Activated B cell treated with CpG ODN at 0.5 μM for 24 hours (primary cell): ENCODE measurements at regions of chr13 and their contacts with region 1.

Region 1: GRCh38 chr13:40580566-40581276 is 85.7 kb downstream of the FOXO1 start:
- DNase-seq: no peak
- ATAC-seq: no peak
- H3K4me3 Mint-ChIP-seq: peak overlapping the region; percentile 64
- H3K27ac Mint-ChIP-seq: peak overlapping the region; percentile 78
- H3K4me1 Mint-ChIP-seq: peaks cover 92% of the 10 kb centered on the region
- H3K27me3 Mint-ChIP-seq: no peaks in the 10 kb centered on the region
- CTCF ChIP-seq: no peak

Region 2: GRCh38 chr13:40564342-40565001 is 16.2 kb before region 1 on chr13:
- CTCF ChIA-PET with region 1: interaction called, 3 read pairs
- POLR2A ChIA-PET with region 1: interaction called, 7 read pairs
- intact Hi-C with region 1: loop called (anchors 2 kb)
- DNase-seq: no peak
- ATAC-seq: peak; percentile 47
- H3K4me3 Mint-ChIP-seq: peak overlapping the region; percentile 63
- H3K27ac Mint-ChIP-seq: peak overlapping the region; percentile 59
- H3K4me1 Mint-ChIP-seq: peaks cover 87% of the 10 kb centered on the region
- H3K27me3 Mint-ChIP-seq: no peaks in the 10 kb centered on the region
- CTCF ChIP-seq: no peak

Region 3: GRCh38 chr13:40660141-40660664 is 79.5 kb after region 1 on chr13:
- CTCF ChIA-PET with region 1: no interaction called
- POLR2A ChIA-PET with region 1: interaction called, 11 read pairs
- intact Hi-C with region 1: no loop called
- DNase-seq: no peak
- ATAC-seq: no peak
- H3K4me3 Mint-ChIP-seq: peak overlapping the region; percentile 6
- H3K27ac Mint-ChIP-seq: no peak overlapping the region
- H3K4me1 Mint-ChIP-seq: peaks cover 83% of the 10 kb centered on the region
- H3K27me3 Mint-ChIP-seq: no peaks in the 10 kb centered on the region
- CTCF ChIP-seq: no peak